Naive thymus-derived CD4-positive, alpha-beta T cell (primary cell): ENCODE measurements at regions of chr10 and their contacts with region 1.

Region 1: GRCh38 chr10:17617031-17617911 is at the start of gene HACD1:
- DNase-seq: peak; percentile 15 to 63 (median 33)
- ATAC-seq: peak; percentile 74
- H3K4me3 ChIP-seq: peak within 1 kb of the TSS; percentile 80
- H3K4me3 Mint-ChIP-seq: peak within 1 kb of the TSS; percentile 86 to 93 (median 90)
- H3K27ac ChIP-seq: no peak within 1 kb of the TSS
- H3K27ac Mint-ChIP-seq: peak within 1 kb of the TSS in 3 of 9 donors; percentile 29 to 68 (median 52)
- H3K4me1 ChIP-seq: peaks cover 0 to 3% of the 10 kb centered on the region in 2 donors
- H3K4me1 Mint-ChIP-seq: peaks cover 0 to 16% (median 6%) of the 10 kb centered on the region in 7 donors
- H3K27me3 ChIP-seq: no peaks in the 10 kb centered on the region
- H3K27me3 Mint-ChIP-seq: peaks cover 13 to 39% (median 21%) of the 10 kb centered on the region in 5 donors
- total RNA-seq, gene HACD1: 0.24 to 1.6 (median 0.80) TPM in 3 of 5 experiments, not detected in the others

Region 2: DNA sequence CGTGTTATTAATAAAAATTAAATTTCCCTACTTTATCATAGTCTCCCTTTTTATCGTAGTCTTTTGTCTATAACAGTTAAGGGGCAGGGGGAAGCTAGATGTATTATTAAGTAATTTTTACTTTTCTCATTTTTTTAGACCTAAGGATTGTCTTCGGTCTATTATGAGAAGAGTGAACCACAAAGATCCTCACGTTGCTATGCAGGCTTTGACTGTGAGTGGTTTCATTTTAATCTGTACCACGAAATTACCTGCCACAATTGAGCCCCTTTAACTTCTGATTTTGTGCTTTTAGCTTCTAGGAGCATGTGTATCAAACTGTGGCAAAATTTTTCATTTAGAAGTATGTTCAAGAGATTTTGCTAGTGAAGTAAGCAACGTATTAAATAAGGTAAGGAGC is 67.3 kb after region 1 on chr10:
- CTCF ChIA-PET with region 1: no interaction called
- POLR2A ChIA-PET with region 1: no interaction called
- intact Hi-C with region 1: loop called in 1 of 2 experiments (anchors 5 kb)
- DNase-seq: no peak
- ATAC-seq: no peak
- H3K4me3 ChIP-seq: no peak overlapping the region
- H3K4me3 Mint-ChIP-seq: no peak overlapping the region
- H3K27ac ChIP-seq: no peak overlapping the region
- H3K27ac Mint-ChIP-seq: no peak overlapping the region
- H3K4me1 ChIP-seq: no peaks in the 10 kb centered on the region
- H3K4me1 Mint-ChIP-seq: peaks cover 28 to 47% (median 42%) of the 10 kb centered on the region in 7 donors
- H3K27me3 ChIP-seq: no peaks in the 10 kb centered on the region
- H3K27me3 Mint-ChIP-seq: no peaks in the 10 kb centered on the region

Region 3: DNA sequence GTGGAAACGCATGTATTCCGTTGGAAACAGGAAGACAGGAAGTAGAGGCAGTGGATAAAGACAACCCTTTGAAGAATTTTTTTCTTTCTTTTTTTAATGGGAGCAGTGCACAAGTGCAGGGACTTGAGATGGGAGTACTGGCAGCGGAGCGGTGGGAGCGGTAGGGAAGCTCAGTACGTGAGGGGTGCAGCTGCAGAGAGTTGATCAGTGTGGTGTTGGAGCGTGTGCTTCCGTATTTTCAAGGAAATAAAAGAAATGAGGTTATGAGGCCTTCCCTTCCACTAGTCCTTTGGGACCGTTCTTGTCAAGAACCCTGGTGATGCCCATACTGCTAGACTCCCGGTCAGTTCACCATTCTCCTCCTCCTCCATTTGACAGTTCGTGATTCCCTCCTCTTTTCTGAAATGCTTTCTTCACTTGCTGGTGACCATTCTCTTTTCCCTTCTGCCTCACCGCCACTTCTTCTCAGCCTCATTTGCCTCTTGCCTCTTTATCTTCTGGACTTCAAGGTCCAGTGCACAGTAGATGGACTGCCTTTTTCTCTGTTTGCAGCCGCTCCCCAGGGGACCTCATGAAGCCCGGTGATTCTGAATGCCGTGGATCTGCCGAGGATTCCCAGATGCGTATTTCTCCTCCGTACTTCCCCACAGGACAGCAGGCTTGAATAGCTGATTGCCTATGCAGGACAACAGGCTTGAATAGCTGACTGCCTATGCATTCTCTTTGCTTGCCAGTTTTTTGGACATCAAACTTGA is 95.6 kb after region 1 on chr10:
- CTCF ChIA-PET with region 1: no interaction called
- POLR2A ChIA-PET with region 1: no interaction called
- intact Hi-C with region 1: no loop called
- DNase-seq: no peak
- ATAC-seq: no peak
- H3K4me3 ChIP-seq: no peak overlapping the region
- H3K4me3 Mint-ChIP-seq: no peak overlapping the region
- H3K27ac ChIP-seq: no peak overlapping the region
- H3K27ac Mint-ChIP-seq: peak overlapping the region in 2 of 9 donors; percentile 3 to 43
- H3K4me1 ChIP-seq: no peaks in the 10 kb centered on the region
- H3K4me1 Mint-ChIP-seq: no peaks in the 10 kb centered on the region
- H3K27me3 ChIP-seq: no peaks in the 10 kb centered on the region
- H3K27me3 Mint-ChIP-seq: no peaks in the 10 kb centered on the region